Vagina (tissue), 2 donors: ENCODE measurements at regions of chr5 and their contacts with region 1.

Region 1: DNA sequence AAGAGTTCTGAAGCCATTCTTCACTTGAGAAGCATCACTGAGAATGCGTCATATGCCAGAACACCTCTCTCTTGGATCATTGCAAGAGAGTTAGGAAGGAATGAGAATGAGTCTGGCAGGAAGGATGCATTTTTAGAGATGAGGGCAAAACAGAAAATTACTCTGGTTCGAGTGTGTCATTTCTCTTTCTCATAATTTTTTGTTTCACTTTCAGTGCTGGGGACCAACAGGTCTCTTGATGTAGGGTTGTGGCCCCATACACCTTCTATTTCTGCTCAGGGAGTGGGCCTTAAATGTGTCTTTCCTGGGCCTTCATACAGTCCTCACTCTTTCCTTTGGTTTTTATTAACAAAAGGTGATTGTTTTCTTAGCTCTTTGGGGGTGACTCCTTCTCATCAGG is 302.4 kb downstream of the NR3C1 start:
- DNase-seq: no peak
- H3K4me3 ChIP-seq: no peak overlapping the region
- H3K27ac ChIP-seq: no peak overlapping the region
- H3K4me1 ChIP-seq: no peaks in the 10 kb centered on the region
- H3K27me3 ChIP-seq: no peaks in the 10 kb centered on the region
- CTCF ChIP-seq: no peak
- POLR2A ChIP-seq: no peak

Region 2: DNA sequence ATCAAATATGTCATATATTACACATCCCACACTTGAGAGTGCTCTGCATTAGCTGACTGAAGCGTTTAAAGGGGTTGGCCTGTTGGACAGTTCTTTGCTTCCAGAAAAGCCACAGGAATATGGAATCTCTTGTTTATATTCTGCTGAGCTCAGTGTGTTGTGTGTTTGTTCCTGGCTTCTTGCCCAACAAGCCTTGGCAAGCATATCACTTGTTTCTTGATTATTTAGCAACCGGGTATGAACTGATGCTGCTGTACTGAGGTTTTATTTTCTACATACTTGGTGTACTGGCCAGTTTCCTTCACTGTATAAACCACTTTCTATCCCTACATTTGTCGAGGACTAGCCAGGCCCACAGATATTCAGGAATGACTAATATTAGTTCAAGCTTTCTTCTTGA is 1448.5 kb after region 1 on chr5:
- intact Hi-C with region 1: loop called (anchors 5 kb)
- DNase-seq: no peak
- H3K4me3 ChIP-seq: no peak overlapping the region
- H3K27ac ChIP-seq: no peak overlapping the region
- H3K4me1 ChIP-seq: no peaks in the 10 kb centered on the region
- H3K27me3 ChIP-seq: no peaks in the 10 kb centered on the region
- CTCF ChIP-seq: no peak
- POLR2A ChIP-seq: no peak